OCI-LY7 (cell line): ENCODE measurements at regions of chr7 and their contacts with region 1.

Region 1: DNA sequence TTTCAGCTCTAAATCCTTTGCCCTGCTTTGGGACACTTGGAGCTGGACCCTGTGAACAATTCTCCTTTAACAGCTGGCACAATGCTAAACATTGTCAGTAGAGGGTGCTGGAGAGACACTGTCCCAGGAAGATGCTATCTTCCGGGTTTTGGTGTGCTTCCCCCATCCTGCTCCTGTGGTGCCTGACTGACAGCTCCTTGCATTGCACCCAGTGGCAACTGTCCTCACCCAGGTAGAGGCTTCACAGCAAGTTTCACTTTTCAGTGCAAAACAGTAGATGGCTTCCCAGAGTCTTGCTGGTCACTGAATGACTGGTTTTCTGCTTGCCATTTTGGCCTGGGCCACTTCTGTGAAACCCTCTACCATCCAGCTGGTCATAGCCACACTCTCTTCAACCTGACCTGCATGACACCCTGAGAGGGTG is 77.3 kb downstream of the CDC14C start:
- DNase-seq: peak; percentile 83
- H3K4me3 ChIP-seq: no peak overlapping the region
- H3K27ac ChIP-seq: no peak overlapping the region
- H3K4me1 ChIP-seq: peaks cover 6% of the 10 kb centered on the region
- CTCF ChIP-seq: peak; percentile 89

Region 2: GRCh38 chr7:49166441-49166840 is 164.8 kb after region 1 on chr7:
- CTCF ChIA-PET with region 1: no interaction called
- POLR2A ChIA-PET with region 1: no interaction called
- intact Hi-C with region 1: loop called (anchors 10 kb)
- DNase-seq: peak; percentile 40
- H3K4me3 ChIP-seq: no peak overlapping the region
- H3K27ac ChIP-seq: no peak overlapping the region
- H3K4me1 ChIP-seq: no peaks in the 10 kb centered on the region
- CTCF ChIP-seq: peak; percentile 76

Region 3: DNA sequence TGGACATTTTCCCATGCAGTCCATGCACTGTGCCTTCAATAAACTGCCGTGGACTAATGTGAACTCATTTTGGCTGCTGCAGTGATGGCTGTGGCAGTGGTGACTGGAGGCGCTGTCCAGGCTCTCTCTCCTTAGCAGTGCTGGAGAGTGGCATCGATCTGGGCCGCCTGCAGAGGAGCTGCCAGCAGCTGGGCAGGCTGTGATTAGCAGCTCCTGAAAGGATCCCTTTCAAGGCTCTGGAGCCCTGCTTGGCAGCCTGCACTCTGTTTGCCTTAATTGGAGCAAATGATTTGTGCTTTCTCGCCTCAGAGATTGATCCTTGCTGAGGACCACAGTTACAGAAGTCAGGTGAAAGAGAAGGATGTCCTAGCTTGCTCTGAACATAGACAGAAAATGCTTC is 641.7 kb after region 1 on chr7:
- CTCF ChIA-PET with region 1: no interaction called
- POLR2A ChIA-PET with region 1: no interaction called
- intact Hi-C with region 1: loop called (anchors 10 kb)
- DNase-seq: no peak
- H3K4me3 ChIP-seq: no peak overlapping the region
- H3K27ac ChIP-seq: no peak overlapping the region
- H3K4me1 ChIP-seq: peaks cover 7% of the 10 kb centered on the region
- CTCF ChIP-seq: no peak